Cardiac septum (tissue), 1 donor: ENCODE measurements at regions of chr5 and their contacts with region 1.

Region 1: GRCh38 chr5:149618581-149619251 is 37.4 kb downstream of the ARHGEF37 start:
- DNase-seq: no peak

Region 2: DNA sequence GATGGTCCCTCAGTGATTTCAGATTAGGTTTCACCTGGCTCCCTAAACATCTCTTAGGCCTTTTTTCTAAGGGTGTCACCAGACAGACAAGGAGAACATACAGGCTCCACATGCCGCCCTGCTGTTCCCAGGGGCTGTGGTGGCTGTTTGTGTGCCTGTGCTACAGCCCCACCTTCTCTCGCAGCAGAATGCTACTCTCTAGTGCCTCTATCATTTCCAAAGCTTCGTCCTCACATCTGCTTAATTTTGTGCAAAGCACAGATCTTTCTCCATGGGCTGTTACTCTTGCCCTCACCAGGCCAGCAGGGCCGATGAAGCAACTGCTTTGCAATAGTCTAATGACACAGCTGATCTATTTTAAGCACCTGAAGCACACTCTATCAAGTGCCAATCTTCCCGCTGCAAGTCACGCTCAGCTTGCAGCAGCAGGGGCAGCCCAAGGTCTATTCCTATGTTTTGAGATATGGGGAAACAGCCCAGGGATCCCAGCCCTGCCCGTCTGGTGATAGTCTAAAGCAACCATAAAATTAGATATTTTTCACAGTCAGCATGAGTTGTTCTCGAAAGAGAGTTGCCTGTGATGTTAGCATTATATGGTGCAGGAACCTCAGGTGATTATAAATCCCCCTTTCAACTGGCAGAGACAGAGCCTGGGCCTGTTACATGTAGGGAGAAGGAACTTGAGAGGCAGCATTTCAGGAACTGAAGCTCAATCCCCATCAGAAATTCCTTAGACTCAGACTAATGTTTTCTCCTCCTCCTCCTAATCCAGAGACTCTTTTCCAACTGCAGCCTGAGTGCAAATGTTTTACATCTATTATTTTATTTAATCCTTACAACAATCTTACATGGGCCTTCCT is 464.7 kb before region 1 on chr5:
- intact Hi-C with region 1: no loop called
- DNase-seq: no peak

Region 3: DNA sequence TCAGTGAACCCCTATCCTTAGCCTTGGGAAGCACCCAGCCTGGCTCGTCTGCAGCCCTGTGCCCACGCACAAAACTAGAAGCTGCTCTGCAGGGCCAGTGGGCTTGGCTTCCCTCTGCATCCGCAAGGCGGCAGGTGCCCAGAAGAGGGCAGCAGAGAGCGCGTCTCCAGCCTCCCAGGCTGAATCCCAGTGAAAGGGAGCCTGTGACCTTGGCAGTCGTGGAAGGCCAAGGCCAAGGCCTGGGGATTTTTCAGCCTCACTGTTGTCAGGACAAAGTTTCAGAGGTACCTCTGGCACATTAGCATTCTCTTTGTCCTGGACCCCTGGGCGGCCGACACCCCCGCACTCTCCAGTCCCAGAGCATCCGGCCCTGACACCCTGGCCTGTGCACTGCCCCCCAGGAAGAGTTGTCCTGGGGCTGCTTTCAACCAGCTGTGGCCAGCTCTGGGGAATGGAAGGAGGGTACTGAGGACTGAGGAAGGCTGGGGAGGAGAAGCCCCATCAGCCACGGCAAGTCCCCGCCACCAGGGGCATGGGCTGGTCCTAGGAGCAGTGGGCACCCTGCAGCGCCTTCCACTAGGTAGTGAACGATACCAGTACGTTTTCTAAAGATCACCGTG is 176.0 kb before region 1 on chr5:
- intact Hi-C with region 1: loop called (anchors 5 kb)
- DNase-seq: peak; percentile 92

Region 4: DNA sequence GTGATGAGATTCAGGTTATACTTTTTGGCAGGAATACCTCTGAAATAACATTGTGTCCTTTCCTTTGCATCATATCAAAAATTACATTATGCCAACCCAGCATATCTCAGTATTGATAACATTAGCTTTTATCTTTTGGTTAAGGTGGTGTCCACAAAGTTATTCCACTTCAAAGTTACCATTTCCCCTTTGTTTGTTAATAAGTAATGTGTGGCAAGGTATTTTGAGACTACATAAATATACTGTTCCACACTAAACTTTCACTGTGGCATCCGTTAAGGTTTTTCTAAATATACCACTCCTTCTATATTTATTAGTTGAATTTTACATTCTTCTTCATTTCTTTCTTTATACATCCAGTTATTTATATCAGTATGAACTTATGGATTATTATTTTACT is 51.5 kb before region 1 on chr5:
- intact Hi-C with region 1: loop called (anchors 5 kb)
- DNase-seq: no peak

Region 5: GRCh38 chr5:149581192-149581861 is 37.4 kb before region 1 on chr5 and contains the start of gene ARHGEF37:
- intact Hi-C with region 1: loop called (anchors 5 kb)
- DNase-seq: peak; percentile 94
- total RNA-seq, gene ARHGEF37: 15.8 TPM

Region 6: DNA sequence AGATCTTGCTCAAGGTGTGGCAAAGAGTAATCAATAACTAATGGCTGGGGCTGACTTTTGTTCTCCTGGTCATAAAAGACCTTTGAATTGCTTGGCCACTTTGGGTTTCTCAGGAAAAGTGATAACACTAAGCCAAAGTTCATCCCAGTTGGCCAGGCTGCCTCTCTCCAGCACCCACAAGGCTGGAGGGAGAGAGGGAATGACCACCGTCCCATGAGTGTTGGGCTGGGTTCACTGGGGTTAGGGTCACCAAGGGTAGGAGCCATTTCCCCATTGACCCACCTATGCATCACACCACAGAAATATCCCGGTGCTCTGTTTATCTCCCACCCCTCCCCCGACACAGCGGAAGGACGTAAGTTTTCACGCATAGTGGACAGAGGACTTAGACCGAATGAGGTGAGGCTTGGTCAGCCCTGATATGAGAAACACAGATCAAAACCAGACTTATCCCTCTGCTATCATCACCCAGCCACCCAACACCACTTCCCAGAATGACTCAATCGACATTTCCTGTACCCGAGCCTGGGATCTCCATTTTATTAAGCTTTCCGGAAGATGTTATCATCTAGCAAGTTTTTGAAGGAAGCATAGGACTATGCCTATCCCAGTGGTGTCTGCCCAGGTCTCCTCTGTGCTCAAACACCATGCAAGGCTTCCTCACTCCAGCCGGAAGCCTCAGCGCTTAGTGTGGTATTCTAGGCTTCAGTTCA is 84.4 kb after region 1 on chr5:
- intact Hi-C with region 1: no loop called
- DNase-seq: no peak